Activated CD4-positive, alpha-beta memory T cell treated with anti-CD3 and anti-CD28 coated beads, Interleukin-2, amount 10 ng/mL, durations not matched to agents 7 days and 5 days (primary cell): ENCODE measurements at regions of chr11 and their contacts with region 1.

Region 1: GRCh38 chr11:6315811-6316425 is 4.4 kb downstream of the CAVIN3 start:
- DNase-seq: peak; percentile 42
- H3K4me3 Mint-ChIP-seq: no peak overlapping the region
- H3K27ac Mint-ChIP-seq: no peak overlapping the region
- H3K4me1 Mint-ChIP-seq: peaks cover 30% of the 10 kb centered on the region
- H3K27me3 Mint-ChIP-seq: peaks cover 25% of the 10 kb centered on the region

Region 2: DNA sequence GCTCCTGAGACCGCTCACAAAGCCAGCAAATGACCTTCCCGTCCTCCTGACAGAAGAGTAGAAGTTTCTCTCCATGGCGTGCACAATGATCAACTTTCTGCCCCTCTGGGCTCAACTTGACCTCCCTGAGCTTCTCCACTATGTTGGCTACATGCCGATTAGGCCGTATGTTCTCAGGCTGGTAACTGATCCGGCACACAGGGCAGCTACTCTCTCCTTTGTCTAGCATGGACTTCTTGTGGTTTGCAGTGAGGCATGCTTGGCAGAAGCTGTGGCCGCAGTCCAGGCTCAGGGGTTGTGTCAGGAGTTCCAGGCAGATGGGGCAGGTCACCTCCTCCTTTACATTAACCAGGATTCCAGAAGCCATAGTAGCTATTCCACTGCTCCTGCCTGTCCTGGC is 636.1 kb before region 1 on chr11:
- CTCF ChIA-PET with region 1: no interaction called
- POLR2A ChIA-PET with region 1: no interaction called
- DNase-seq: no peak
- H3K4me3 Mint-ChIP-seq: no peak overlapping the region
- H3K27ac Mint-ChIP-seq: no peak overlapping the region
- H3K4me1 Mint-ChIP-seq: peaks cover 28% of the 10 kb centered on the region
- H3K27me3 Mint-ChIP-seq: no peaks in the 10 kb centered on the region

Region 3: GRCh38 chr11:5837695-5838094 is 478.2 kb before region 1 on chr11:
- CTCF ChIA-PET with region 1: no interaction called
- POLR2A ChIA-PET with region 1: no interaction called
- DNase-seq: no peak
- H3K4me3 Mint-ChIP-seq: no peak overlapping the region
- H3K27ac Mint-ChIP-seq: no peak overlapping the region
- H3K4me1 Mint-ChIP-seq: no peaks in the 10 kb centered on the region
- H3K27me3 Mint-ChIP-seq: peaks cover 3% of the 10 kb centered on the region

Region 4: DNA sequence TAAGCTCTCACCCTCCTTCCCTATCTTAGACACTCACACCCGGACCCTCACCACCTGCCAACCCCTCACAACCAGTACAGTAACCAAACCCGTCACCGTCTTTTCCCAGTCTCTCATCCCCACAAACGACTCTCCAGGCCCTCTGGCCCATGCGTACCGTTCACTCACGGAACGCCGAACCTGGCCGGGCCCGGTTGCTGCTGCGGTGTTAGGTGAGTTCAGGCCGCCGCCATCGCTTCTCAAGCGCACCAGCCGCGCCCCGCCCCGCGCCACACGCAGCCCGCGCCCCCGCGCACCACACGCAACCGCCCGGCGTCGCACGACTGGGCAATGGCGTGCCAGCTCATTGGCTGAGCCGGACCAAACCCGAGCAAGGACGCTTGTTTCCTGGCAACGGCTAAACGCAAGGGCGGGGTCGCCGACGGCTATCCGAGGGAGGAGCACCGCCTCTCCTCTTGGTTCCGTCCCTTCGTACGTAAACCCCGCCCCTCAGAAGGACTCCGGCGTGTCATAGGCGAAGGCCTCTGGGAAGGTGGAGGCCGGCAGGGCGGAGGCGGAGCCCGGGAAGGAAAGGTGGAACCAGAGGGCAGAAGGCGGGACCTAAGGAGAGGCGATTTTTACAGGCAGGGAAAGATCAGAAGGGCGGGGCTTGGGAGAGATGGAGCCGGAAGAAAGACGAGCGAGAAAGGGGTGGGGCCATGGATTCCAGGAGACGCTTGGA is 81.4 kb before region 1 on chr11 and contains the start of gene FHIP1B:
- CTCF ChIA-PET with region 1: interaction called, 4 read pairs
- POLR2A ChIA-PET with region 1: interaction called, 10 read pairs
- DNase-seq: peak; percentile 100
- H3K4me3 Mint-ChIP-seq: peak within 1 kb of the TSS; percentile 99
- H3K27ac Mint-ChIP-seq: peak within 1 kb of the TSS; percentile 84
- H3K4me1 Mint-ChIP-seq: peaks cover 42% of the 10 kb centered on the region
- H3K27me3 Mint-ChIP-seq: no peaks in the 10 kb centered on the region
- total RNA-seq, gene FHIP1B: 19.1 to 19.2 TPM

Region 5: DNA sequence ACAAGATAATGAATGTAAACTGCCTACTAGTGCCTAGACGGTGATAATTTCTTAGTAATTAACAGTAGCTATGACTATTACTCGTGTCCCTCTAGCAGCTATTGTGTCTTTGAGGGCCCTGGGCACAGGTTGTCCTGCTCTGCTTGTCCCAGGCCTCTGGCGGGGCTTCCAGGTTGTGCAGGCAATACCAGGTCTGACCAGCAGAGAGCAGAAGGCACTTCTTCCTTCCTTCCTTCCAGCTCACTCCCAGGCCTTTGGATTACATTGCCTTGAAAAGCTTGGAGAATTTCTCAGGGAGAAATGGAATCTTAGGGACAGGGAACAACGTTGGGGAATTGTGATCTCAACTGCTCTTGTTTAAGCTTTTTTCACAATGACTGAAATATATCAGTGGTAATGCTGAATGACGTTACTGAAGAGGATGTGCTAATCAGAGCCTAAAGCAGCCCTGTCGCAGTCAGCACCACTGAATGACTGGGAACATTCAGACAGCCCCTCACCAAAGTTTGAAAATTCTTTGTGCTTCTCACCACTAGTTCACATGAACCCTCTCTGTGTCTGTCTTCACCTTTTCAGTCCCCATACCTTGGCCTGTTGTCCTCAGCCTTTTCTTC is 64.7 kb before region 1 on chr11:
- CTCF ChIA-PET with region 1: interaction called, 19 read pairs
- POLR2A ChIA-PET with region 1: interaction called, 3 read pairs
- DNase-seq: peak; percentile 64
- H3K4me3 Mint-ChIP-seq: no peak overlapping the region
- H3K27ac Mint-ChIP-seq: no peak overlapping the region
- H3K4me1 Mint-ChIP-seq: no peaks in the 10 kb centered on the region
- H3K27me3 Mint-ChIP-seq: peaks cover 4% of the 10 kb centered on the region

Region 6: GRCh38 chr11:6353367-6353987 is 37.6 kb after region 1 on chr11:
- CTCF ChIA-PET with region 1: interaction called, 54 read pairs
- POLR2A ChIA-PET with region 1: interaction called, 8 read pairs
- DNase-seq: peak; percentile 62
- H3K4me3 Mint-ChIP-seq: no peak overlapping the region
- H3K27ac Mint-ChIP-seq: no peak overlapping the region
- H3K4me1 Mint-ChIP-seq: peaks cover 19% of the 10 kb centered on the region
- H3K27me3 Mint-ChIP-seq: no peaks in the 10 kb centered on the region

Region 7: GRCh38 chr11:6362873-6363678 is 47.2 kb after region 1 on chr11:
- CTCF ChIA-PET with region 1: interaction called, 11 read pairs
- POLR2A ChIA-PET with region 1: no interaction called
- DNase-seq: peak; percentile 78
- H3K4me3 Mint-ChIP-seq: no peak overlapping the region
- H3K27ac Mint-ChIP-seq: no peak overlapping the region
- H3K4me1 Mint-ChIP-seq: no peaks in the 10 kb centered on the region
- H3K27me3 Mint-ChIP-seq: no peaks in the 10 kb centered on the region

Region 8: DNA sequence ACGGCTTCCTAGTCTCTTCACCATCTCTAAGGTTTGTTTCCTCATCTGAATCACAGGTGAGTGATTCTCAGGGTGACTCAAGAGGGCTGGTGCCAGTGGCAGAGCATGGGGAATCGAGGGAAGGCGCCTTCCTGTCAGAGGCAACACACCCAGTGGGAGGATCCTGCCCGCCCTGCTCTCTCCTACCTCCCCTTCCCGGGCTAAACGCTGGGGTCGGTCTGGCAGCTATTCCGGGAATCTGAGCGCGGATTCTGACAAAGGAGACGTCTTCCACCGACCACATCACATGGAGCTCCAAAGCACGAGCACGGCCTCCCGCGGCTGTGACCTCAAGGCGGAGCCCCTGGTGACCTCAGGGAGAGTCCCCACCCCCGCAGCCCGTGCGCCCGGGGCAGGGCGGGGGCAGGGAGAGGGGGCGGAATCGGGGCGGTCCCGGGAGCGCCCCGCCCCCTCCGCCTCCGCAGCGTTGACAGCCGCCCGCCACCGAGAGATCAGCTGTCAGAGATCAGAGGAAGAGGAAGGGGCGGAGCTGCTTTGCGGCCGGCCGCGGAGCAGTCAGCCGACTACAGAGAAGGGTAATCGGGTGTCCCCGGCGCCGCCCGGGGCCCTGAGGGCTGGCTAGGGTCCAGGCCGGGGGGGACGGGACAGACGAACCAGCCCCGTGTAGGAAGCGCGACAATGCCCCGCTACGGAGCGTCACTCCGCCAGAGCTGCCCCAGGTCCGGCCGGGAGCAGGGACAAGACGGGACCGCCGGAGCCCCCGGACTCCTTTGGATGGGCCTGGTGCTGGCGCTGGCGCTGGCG is 74.2 kb after region 1 on chr11 and contains the start of gene SMPD1:
- CTCF ChIA-PET with region 1: no interaction called
- POLR2A ChIA-PET with region 1: no interaction called
- DNase-seq: peak; percentile 96
- H3K4me3 Mint-ChIP-seq: peak within 1 kb of the TSS; percentile 93
- H3K27ac Mint-ChIP-seq: peak within 1 kb of the TSS; percentile 97
- H3K4me1 Mint-ChIP-seq: peaks cover 43% of the 10 kb centered on the region
- H3K27me3 Mint-ChIP-seq: no peaks in the 10 kb centered on the region
- total RNA-seq, gene SMPD1: 55.1 to 58.5 TPM

Region 9: GRCh38 chr11:6919698-6920097 is 603.8 kb after region 1 on chr11:
- CTCF ChIA-PET with region 1: no interaction called
- POLR2A ChIA-PET with region 1: no interaction called
- DNase-seq: no peak
- H3K4me3 Mint-ChIP-seq: no peak overlapping the region
- H3K27ac Mint-ChIP-seq: no peak overlapping the region
- H3K4me1 Mint-ChIP-seq: no peaks in the 10 kb centered on the region
- H3K27me3 Mint-ChIP-seq: peaks cover 15% of the 10 kb centered on the region